ENCODE measurements at regions of chr1 and their contacts with region 1.

Region 1: GRCh38 chr1:204791453-204792353 is 79.0 kb upstream of the NFASC start:
- DNase-seq: peak; percentile 81
- H3K4me3 Mint-ChIP-seq: no peak overlapping the region
- H3K27ac Mint-ChIP-seq: no peak overlapping the region
- H3K4me1 Mint-ChIP-seq: no peaks in the 10 kb centered on the region
- H3K27me3 Mint-ChIP-seq: peaks cover 54% of the 10 kb centered on the region
- CTCF ChIP-seq: peak; percentile 96

Region 2: DNA sequence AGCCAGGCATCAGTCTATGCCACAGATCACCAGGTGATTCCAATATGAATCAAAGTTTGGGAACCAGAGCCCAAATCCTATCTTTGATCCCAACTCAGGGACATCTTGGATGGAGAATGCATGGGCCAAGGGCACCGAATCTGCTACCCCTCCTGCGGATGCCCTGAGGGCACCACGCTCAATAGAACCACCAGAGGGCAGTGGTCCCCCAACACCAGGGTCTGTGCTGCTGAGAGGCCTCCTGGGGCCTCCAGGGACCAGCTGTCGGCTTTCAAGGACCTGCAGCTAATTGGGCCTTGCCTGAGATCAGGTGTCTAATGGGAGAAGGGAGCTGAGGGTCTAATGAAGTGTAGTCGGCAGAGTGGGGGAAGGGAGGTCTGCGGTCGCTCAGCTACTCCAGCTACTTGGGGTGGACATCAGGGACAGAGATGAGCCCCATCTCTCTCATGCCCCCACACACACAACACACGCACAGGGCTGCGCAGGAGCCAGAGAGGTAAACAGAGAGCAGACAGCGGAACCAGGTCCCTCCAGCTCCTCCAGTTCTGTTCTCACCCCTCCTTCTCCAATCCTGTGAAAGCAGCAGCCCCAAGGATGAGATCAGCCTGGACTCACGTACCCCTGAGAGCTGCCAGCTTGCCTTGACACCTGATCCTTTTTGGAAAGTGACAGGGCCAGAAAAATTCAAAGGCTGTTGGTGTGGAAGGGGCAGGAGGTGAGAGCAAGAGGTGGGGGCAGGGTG is 345.2 kb before region 1 on chr1:
- CTCF ChIA-PET with region 1: no interaction called
- POLR2A ChIA-PET with region 1: no interaction called
- intact Hi-C with region 1: no loop called
- DNase-seq: peak; percentile 65
- H3K4me3 Mint-ChIP-seq: no peak overlapping the region
- H3K27ac Mint-ChIP-seq: no peak overlapping the region
- H3K4me1 Mint-ChIP-seq: peaks cover 46% of the 10 kb centered on the region
- H3K27me3 Mint-ChIP-seq: no peaks in the 10 kb centered on the region
- CTCF ChIP-seq: peak; percentile 49

Region 3: DNA sequence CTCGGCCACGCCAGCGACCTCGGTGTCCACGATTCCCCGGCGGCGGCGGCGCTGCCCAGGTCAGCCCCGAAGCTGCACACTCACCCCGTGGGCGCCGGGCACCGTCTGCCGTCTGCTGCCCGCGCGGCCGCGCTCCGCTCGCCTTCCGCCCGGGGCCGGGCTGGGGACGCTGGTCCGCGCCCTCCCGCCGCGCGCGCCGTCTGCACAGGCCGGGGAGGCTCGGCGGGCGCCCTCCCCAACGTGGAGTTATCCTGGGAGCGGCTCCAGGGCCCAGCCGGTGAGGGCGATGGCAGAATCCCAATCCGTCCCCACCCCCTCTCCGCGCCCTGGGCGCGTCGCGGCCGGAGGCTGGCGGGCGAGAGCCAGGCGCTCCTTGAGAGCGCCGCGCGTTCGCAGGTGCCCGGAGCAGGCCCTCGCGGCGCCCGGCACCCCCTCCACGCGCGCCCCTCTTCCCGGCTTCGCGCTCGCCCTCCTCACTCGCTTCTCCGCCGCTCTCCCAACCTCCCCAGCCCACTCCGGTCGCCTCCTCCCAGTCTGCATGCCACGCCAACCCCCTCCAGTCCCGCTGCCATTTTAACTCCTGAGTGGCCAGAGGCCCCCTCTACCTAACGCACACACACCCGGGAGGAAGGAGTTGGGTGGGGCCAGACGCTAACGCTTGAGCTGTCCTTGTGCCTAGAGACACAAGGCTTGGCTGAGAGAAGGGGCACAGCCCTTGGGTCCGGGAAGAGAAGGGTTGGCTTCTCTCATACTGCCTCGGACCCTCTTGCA is 106.3 kb before region 1 on chr1 and contains the start of gene LRRN2:
- CTCF ChIA-PET with region 1: interaction called, 12 read pairs
- POLR2A ChIA-PET with region 1: interaction called, 3 read pairs
- intact Hi-C with region 1: no loop called
- DNase-seq: no peak
- H3K4me3 Mint-ChIP-seq: peak within 1 kb of the TSS; percentile 53
- H3K27ac Mint-ChIP-seq: no peak within 1 kb of the TSS
- H3K4me1 Mint-ChIP-seq: no peaks in the 10 kb centered on the region
- H3K27me3 Mint-ChIP-seq: peaks cover 36% of the 10 kb centered on the region
- CTCF ChIP-seq: no peak
- total RNA-seq, gene LRRN2: not detected in 2 replicates

Region 4: GRCh38 chr1:204751894-204752687 is 39.6 kb before region 1 on chr1:
- CTCF ChIA-PET with region 1: interaction called, 17 read pairs
- POLR2A ChIA-PET with region 1: no interaction called
- intact Hi-C with region 1: no loop called
- DNase-seq: peak; percentile 83
- H3K4me3 Mint-ChIP-seq: no peak overlapping the region
- H3K27ac Mint-ChIP-seq: no peak overlapping the region
- H3K4me1 Mint-ChIP-seq: no peaks in the 10 kb centered on the region
- H3K27me3 Mint-ChIP-seq: peaks cover 41% of the 10 kb centered on the region
- CTCF ChIP-seq: peak; percentile 44

Region 5: GRCh38 chr1:204763706-204764427 is 27.8 kb before region 1 on chr1:
- CTCF ChIA-PET with region 1: interaction called, 16 read pairs
- POLR2A ChIA-PET with region 1: interaction called, 3 read pairs
- intact Hi-C with region 1: no loop called
- DNase-seq: peak; percentile 94
- H3K4me3 Mint-ChIP-seq: no peak overlapping the region
- H3K27ac Mint-ChIP-seq: no peak overlapping the region
- H3K4me1 Mint-ChIP-seq: peaks cover 11% of the 10 kb centered on the region
- H3K27me3 Mint-ChIP-seq: peaks cover 57% of the 10 kb centered on the region
- CTCF ChIP-seq: peak; percentile 98

Region 6: DNA sequence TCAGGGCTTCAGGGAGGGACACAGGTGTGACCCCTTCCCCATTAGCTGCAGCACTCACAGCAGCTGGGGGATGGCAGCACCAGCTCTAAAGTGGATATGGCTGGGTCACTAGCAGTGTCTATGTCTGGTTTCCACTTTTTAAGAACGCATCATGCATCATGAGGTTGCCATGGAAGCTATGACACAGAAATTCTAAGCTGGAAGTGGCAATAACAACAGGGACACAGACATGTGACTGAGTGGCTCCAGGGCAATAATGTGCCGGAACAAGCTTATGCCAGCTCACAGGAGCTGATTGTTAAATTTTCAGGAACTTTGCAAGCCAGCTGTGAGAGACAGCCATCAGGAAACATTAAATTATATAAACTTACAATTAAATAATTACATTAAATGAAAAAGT is 27.8 kb after region 1 on chr1:
- CTCF ChIA-PET with region 1: interaction called, 11 read pairs
- POLR2A ChIA-PET with region 1: no interaction called
- intact Hi-C with region 1: no loop called
- DNase-seq: no peak
- H3K4me3 Mint-ChIP-seq: no peak overlapping the region
- H3K27ac Mint-ChIP-seq: no peak overlapping the region
- H3K4me1 Mint-ChIP-seq: no peaks in the 10 kb centered on the region
- H3K27me3 Mint-ChIP-seq: peaks cover 82% of the 10 kb centered on the region
- CTCF ChIP-seq: no peak

Region 7: DNA sequence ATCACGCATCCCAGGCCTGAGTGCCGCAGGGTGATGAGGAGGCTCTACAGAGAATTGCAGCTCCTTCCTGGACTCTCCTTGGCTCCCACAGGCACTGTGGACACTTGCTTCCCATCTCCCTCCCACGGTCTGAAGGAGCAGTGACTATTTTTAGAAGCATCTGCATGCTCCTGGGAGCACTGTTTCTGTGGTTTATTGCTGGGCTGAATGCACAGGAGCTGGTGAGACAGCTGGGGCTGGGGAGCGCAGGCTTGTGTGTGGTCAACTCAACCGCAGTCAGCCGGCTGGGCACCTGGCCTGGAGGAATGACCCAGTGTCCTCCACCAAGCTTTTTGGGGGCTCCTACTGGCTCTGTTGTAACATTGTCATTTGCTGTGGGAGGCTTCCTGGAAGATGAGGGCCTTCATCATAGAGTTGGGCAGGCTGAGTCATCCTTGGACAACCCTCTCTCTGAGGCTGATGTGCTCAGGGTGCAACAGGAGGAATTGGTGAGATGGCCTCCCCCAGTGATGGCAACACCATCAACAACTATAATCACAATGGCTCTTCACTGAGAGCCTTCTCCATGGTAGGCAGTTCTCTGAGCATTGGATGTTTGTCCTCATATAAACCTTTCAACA is 80.7 kb after region 1 on chr1:
- CTCF ChIA-PET with region 1: no interaction called
- POLR2A ChIA-PET with region 1: no interaction called
- intact Hi-C with region 1: no loop called
- DNase-seq: no peak
- H3K4me3 Mint-ChIP-seq: no peak overlapping the region
- H3K27ac Mint-ChIP-seq: no peak overlapping the region
- H3K4me1 Mint-ChIP-seq: no peaks in the 10 kb centered on the region
- H3K27me3 Mint-ChIP-seq: peaks cover 47% of the 10 kb centered on the region
- CTCF ChIP-seq: no peak